ACHN (cell line): ENCODE measurements at regions of chr12 and their contacts with region 1.

Region 1: DNA sequence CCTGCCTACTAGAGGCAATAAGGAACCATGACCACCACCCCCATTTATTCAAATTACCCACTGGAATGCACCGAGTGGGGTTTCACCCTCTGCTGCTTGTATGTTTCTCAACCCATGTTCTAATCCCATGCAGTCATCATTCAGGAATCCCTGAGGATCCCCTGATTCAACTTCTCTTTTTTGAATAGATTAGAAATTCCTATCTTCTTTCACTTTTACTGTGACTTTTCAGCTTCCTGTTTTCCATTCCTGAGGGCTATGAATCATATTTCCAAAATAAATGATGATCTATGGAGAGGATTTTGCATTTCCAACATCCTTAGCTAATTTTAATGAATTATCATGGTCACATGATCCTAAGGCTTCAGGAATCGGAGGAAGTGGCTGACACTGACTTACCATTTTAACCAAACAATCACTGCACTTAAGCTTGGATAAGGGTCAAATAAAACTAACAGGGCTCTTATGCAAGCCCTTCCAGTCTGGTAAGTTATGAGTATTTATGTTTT is 19.4 kb upstream of the P2RX4 start:
- DNase-seq: peak; percentile 90

Region 2: DNA sequence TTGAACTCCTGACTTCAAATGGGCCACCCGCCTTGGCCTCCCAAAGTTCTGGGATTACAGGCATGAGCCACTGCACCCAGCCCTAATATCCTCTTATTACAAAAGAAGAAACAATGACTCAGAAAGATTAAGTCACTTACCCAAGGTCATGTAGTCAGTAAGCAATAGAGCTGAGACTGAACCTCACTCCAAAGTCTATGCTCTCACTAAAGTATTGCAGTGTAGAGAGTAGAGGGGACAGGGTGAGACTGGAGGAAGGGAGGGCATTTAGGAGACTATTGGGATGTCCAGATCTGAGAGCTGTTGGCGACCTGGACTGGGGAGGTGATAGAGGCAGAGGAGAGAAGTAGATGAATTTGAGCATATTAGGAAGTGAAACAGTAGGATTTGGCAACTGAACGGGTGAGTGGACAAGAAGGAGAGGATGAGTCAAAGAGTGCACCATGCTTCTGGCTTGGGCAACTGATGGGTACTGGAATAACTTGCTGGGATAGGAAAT is 46.1 kb before region 1 on chr12:
- in situ Hi-C with region 1: loop called (anchors 10 kb)
- DNase-seq: peak; percentile 23